Right ventricle myocardium superior (tissue), 1 donor: ENCODE measurements at regions of chr19 and their contacts with region 1.

Region 1: DNA sequence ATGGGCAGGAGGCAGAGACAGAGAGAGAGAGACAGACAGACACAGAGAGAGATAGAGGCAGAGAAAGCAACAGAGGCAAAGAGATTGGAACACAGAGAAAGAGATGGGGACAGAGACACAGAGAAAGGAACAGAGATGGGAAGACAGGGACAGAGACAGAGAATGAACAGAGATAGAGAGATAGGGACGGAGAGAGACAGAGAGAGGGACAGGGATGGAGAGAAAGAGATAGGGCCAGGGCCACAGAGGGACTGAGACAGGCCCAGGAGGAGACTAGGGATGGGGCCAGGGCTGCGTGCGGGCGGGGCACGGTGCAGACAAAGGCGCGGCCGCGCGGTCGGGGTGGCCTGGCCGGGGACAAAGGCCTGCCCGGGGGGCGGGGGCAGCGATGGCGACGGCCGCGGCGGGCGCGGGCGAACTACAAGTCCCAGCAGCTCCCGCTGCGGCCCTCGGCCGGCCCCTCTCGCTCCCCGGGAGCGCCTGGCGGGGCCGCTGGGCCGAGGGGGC is at the start of gene ZNF358:
- DNase-seq: peak; percentile 89
- ATAC-seq: peak; percentile 90
- total RNA-seq, gene ZNF358: 92.1 TPM

Region 2: DNA sequence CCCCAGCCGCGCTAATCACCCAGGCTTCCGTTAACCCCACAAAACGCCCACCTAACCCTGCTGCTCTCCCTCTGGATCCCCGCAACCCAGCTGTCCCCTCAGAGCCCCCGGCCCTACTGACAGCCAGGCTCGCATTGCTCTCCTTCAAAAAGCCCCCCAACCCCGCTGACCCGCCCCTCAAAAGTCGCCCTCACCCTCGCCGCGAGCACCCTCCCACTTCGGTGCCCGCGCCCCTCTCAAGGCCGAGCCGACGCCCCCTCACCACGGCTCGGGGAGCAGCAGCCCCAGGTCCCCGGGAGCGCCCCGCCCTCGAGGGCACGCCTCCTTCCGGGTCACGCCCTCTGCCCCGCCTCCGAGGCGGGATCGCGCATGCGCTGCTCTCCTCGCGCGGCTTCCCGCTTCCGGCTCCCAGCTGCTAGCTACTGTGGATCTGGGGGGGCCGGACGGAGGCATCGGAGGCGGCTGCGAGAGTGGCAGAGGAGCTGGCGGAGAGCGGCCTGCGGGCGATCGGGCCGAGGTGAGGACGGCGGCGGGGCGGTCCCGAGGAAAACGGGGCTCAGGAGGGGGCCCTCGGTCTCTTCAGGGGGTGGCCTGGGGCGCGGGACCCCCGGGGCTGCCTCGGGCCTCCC is 120.9 kb before region 1 on chr19:
- intact Hi-C with region 1: loop called (anchors 10 kb)
- DNase-seq: peak; percentile 91
- ATAC-seq: peak; percentile 100

Region 3: DNA sequence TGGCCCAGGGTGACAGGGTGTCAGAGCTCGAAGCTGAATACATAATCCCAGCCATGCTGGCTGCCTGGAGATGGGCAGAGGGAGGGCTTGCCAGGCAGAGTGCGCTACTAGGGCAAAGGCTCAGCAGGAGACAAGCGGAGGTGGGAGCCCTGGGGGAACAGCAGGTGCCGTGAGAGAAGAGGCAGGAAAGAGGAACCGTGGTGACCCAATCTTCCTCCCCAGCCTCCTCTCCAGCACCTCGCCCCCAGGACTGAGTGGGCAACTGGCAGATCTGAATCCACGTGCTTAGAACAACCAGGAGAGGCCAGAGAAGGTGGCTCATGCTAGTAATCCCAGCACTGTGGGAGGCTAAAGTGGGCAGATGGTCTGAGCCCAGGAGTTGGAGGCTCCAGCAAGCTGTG is 525.8 kb after region 1 on chr19:
- intact Hi-C with region 1: no loop called
- DNase-seq: no peak
- ATAC-seq: no peak